Lower lobe of right lung (tissue), 2 donors: ENCODE measurements at regions of chr11 and their contacts with region 1.

Region 1: GRCh38 chr11:75532200-75533048 is 6.7 kb upstream of the GDPD5 start:
- DNase-seq: peak; percentile 75
- ATAC-seq: peak; percentile 84 to 86
- H3K4me3 ChIP-seq: no peak overlapping the region
- H3K27ac ChIP-seq: no peak overlapping the region
- H3K4me1 ChIP-seq: peaks cover 11% of the 10 kb centered on the region
- H3K27me3 ChIP-seq: no peaks in the 10 kb centered on the region
- CTCF ChIP-seq: peak; percentile 88

Region 2: GRCh38 chr11:75445315-75445953 is 87.0 kb before region 1 on chr11:
- intact Hi-C with region 1: loop called (anchors 5 kb)
- DNase-seq: peak; percentile 75
- ATAC-seq: peak; percentile 75 to 80
- H3K4me3 ChIP-seq: no peak overlapping the region
- H3K27ac ChIP-seq: no peak overlapping the region
- H3K4me1 ChIP-seq: peaks cover 4% of the 10 kb centered on the region
- H3K27me3 ChIP-seq: no peaks in the 10 kb centered on the region
- CTCF ChIP-seq: peak; percentile 96